Ascending aorta (tissue), 2 donors: ENCODE measurements at regions of chr7 and their contacts with region 1.

Region 1: DNA sequence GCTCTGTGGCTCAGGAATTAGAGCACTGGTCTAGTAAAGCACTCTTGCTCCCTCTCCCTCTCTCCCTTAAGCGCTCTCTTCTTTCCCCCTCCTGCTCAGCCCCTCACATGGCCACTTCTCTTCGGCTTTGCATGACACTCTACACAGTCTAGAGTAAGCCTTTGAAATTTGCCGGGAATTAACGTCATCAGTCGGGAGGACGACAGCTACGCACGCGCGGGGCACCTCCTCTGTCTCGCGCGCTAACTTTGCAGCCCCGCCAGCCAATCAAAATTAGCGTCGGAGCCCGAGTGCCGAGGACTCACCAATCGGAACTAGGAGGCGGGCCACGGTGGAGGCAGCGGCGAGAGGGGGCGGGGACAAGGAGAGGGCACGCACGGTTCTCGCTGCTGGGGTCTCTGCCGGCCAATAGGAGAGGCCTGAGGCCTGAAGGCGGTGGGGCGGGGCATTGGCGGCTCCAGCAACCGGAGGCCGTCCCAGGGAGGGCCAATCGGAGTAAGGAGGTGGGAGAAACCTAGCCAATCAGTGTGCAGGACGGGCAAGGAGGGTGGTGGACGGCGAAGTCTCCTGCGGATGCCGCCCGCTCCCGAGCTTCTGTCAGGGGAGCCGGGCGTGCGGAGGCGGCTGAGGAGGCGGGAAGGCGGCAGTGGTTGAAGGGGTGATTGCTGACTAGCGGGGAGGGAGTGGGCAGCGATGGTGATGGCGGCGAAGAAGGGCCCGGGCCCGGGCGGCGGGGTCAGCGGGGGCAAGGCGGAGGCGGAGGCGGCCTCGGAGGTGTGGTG is at the start of gene AGFG2:
- DNase-seq: peak; percentile 100
- H3K4me3 ChIP-seq: peak within 1 kb of the TSS; percentile 97 to 98
- H3K27ac ChIP-seq: peak within 1 kb of the TSS; percentile 71 to 79
- H3K4me1 ChIP-seq: peaks cover 1 to 20% of the 10 kb centered on the region in 2 donors
- H3K27me3 ChIP-seq: no peaks in the 10 kb centered on the region
- CTCF ChIP-seq: no peak
- total RNA-seq, gene AGFG2: 30.0 TPM

Region 2: DNA sequence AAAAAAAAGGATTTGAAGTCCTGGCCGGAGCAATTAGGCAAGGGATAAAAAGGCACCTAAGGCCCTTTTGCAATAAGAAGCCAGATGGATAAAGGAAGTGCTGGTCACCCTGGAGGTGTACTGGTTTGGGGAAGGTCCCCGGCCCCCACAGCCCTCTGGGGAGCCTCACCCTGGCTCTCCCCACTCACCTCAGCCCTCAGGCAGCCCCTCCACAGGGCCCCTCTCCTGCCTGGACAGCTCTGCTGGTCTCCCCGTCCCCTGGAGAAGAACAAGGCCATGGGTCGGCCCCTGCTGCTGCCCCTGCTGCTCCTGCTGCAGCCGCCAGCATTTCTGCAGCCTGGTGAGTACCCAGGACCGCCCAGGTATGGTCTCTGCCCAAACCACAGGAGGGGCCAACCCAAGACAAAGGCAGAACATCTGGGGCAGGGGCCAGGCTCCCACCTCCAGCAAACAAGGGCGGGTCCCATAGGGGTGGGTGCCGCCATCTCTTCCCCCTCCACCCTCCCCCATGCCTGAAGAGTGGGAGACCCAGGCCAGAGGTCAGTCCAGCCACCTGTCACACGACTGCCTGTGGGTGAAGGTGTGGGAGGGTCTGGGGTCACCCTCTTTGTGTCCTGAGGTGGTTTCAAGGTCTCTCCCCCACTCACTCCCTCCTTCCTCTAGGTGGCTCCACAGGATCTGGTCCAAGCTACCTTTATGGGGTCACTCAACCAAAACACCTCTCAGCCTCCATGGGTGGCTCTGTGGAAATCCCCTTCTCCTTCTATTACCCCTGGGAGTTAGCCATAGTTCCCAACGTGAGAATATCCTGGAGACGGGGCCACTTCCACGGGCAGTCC is 180.6 kb before region 1 on chr7 and contains the start of gene PILRB:
- intact Hi-C with region 1: no loop called
- DNase-seq: no peak
- H3K4me3 ChIP-seq: no peak within 1 kb of the TSS
- H3K27ac ChIP-seq: no peak within 1 kb of the TSS
- H3K4me1 ChIP-seq: no peaks in the 10 kb centered on the region
- H3K27me3 ChIP-seq: no peaks in the 10 kb centered on the region
- CTCF ChIP-seq: no peak
- total RNA-seq, gene PILRB: 67.2 TPM

Region 3: DNA sequence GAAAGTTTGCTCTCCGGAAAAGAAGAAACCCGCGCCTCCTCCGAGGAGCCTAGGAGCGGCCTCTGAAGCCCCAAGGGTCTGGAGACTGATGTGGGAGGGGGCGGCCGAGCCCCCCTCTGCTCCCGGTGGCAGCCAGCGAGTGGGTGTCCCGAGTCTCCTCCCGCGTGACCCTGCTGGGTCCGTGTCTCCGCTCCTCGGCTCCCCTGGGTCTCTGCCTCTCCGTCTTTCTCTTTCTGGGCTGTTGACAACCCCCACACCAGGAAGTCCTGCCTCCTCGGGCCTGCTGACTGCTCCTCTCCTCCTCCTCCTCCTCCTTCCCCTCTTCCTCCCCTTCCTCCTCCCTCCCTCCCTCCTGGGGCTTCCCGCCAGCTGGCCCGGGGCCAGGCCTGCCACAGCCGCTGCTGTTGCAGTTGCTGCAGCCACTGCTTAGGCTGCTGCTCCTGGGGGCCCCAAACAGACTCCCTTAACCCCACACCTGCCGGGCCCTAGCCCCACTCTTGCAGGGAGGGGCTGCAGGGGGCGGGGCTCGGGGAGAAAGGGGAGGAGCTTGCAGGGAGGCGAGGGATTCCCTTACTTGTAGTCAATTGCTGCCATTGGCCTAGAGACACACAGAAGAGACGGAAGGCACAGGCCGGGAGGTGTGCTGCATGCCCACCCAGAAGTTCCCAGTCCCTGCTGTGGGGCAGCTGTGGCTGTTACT is 59.7 kb before region 1 on chr7 and contains the start of gene TSC22D4:
- intact Hi-C with region 1: loop called (anchors 2 kb)
- DNase-seq: peak; percentile 77 to 95
- H3K4me3 ChIP-seq: peak within 1 kb of the TSS; percentile 90 to 92
- H3K27ac ChIP-seq: peak within 1 kb of the TSS; percentile 85 to 87
- H3K4me1 ChIP-seq: peaks cover 25 to 39% of the 10 kb centered on the region in 2 donors
- H3K27me3 ChIP-seq: no peaks in the 10 kb centered on the region
- CTCF ChIP-seq: no peak
- total RNA-seq, gene TSC22D4: 68.2 TPM

Region 4: DNA sequence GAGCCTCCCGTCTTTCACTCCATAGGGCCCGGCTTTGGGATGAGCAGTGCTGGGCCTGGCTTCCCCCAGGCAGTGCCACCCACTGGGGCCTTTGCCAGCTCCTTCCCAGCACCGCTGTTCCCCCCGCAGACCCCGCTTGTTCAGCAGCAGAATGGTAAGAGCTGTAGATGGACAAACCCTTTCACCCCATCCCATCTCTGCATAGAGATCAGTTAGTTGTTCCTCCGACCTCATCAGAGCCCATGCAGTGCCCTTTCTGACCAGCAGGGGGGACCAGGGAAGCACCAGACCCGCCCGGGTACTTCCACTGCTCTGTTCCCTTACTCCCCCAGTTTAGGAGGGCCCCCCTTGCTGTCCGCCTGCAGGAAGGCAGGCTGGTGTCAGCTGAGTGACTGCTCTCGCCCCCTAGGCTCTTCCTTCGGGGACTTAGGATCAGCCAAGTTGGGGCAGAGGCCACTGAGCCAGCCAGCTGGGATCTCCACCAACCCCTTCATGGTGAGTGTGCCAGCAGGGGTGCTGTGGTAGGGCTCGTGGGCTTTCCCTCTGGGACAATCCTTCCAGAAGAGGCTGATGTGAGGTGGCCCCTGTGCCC is 25.1 kb after region 1 on chr7:
- intact Hi-C with region 1: loop called (anchors 2 kb)
- DNase-seq: peak in 1 of 2 donors; percentile 89
- H3K4me3 ChIP-seq: no peak overlapping the region
- H3K27ac ChIP-seq: no peak overlapping the region
- H3K4me1 ChIP-seq: no peaks in the 10 kb centered on the region
- H3K27me3 ChIP-seq: no peaks in the 10 kb centered on the region
- CTCF ChIP-seq: peak; percentile 90 to 97 (median 95)

Region 5: DNA sequence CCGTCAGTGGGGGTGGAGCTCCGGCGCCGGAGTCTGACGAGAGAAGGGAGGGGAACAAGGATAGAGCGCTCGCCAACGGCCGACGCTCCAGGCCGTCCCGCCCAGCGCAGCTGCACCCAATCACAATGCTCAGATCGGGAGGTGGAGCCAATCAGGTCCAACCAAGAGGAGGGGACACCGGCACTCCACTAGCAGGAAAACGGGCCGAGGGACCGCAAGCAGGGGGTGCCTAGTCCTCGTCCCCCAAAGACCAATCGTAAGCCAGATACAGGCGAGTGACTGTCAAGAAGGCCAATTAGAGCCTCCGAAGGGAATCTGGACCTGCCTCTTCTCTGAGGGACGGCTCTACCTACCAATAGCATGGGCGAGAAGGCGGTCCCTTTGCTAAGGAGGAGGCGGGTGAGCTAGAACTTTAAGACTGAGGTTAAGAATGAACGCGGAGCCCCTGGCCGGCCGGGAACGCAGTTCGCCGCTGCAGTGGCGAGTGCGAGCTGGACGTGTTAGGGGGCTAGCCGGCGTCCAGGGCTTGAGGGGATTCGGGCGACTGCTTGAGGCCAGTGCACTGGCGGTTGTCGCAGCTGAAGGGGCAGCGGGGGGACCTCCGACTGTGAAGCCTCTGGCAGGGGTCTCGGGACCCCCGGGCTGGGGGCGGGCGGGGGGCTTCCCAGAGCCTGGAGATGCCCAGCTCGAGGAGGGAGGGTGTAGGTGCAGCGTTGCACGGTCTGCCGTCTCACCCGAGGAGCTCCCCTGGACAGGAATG is 47.6 kb after region 1 on chr7 and contains the start of gene FBXO24:
- intact Hi-C with region 1: loop called (anchors 1 kb)
- DNase-seq: peak; percentile 99 to 100
- H3K4me3 ChIP-seq: peak within 1 kb of the TSS; percentile 82 to 84
- H3K27ac ChIP-seq: peak within 1 kb of the TSS; percentile 84 to 87
- H3K4me1 ChIP-seq: peaks cover 0 to 25% of the 10 kb centered on the region in 2 donors
- H3K27me3 ChIP-seq: no peaks in the 10 kb centered on the region
- CTCF ChIP-seq: no peak
- total RNA-seq, gene FBXO24: not detected

Region 6: GRCh38 chr7:100621554-100621953 is 82.7 kb after region 1 on chr7:
- intact Hi-C with region 1: no loop called
- DNase-seq: no peak
- H3K4me3 ChIP-seq: no peak overlapping the region
- H3K27ac ChIP-seq: no peak overlapping the region
- H3K4me1 ChIP-seq: no peaks in the 10 kb centered on the region
- H3K27me3 ChIP-seq: no peaks in the 10 kb centered on the region
- CTCF ChIP-seq: no peak